ENCODE measurements at regions of chr1 and their contacts with region 1.

Region 1: DNA sequence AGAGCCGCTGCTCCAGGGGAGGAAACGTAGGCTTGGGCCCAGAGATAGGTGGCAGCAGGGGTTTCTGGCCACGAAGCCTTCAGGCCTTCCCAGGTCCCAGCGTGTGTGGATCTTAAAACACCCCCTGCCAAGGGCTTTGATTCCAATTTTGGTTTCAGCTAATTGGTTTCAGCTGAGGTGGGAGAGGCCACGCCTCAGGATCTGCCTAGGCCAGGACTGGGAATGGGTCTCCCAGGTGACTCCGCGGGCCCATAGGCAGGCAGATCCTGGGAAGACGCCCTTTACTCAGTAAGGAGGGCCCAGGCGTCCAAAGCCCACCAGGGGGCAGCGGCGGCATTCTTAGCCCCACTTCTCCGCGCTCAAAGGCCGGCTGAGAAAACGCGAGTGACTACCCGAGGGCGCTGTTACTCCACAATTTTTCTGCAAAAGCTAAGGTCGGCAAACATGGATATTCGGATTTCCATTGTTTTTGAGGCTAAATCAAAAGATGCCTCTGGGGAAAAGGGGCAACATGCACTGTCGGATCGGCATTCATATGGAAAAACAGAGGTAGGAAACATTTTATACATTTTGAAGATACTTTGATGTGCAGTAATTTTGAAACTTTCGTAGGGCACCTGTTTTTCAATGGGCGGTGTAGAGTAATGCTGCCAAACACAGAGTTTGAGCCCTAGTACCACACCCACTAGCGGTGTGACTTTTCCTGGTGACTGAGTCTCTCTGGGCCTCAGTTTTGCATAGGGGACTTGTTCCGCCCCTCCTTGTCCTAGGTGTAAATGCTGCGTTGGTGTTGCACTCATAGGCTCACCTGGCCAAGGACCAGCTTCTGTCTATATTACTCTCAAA is 31.8 kb upstream of the BCL10 start:
- DNase-seq: peak; percentile 22
- H3K4me3 Mint-ChIP-seq: no peak overlapping the region
- H3K27ac Mint-ChIP-seq: no peak overlapping the region
- H3K4me1 Mint-ChIP-seq: peaks cover 5% of the 10 kb centered on the region
- H3K27me3 Mint-ChIP-seq: peaks cover 62% of the 10 kb centered on the region

Region 2: DNA sequence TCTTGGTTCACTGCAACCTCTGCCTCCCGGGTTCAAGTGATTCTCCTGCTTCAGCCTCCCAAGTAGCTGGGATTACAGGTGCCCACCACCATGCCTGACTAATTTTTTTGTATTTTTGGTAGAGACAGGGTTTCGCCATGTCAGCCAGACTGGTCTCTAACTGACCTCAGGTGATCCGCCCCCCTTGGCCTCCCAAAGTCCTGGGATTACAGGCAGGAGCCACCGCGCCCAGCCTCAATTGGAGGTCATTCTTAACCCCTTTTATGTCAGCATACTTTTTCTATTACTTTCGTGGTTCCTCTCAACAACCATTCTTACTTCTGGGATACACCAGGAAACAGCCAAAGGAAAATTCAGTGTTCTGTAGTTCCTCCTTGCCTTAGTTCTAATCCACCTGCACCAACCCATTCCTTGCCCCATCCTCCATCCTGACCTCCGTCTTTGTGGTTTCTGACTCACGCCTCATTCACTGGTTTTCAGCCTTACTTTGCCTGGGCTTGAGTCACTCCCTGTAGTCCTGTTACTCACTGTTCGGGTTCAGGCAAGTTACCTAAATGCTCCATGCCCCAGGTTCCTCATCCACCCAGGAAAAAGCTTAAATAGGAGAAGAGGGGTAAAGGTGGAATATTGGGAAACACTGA is 18.9 kb before region 1 on chr1:
- intact Hi-C with region 1: no loop called
- DNase-seq: no peak
- H3K4me3 Mint-ChIP-seq: no peak overlapping the region
- H3K27ac Mint-ChIP-seq: no peak overlapping the region
- H3K4me1 Mint-ChIP-seq: peaks cover 6% of the 10 kb centered on the region
- H3K27me3 Mint-ChIP-seq: peaks cover 46% of the 10 kb centered on the region

Region 3: DNA sequence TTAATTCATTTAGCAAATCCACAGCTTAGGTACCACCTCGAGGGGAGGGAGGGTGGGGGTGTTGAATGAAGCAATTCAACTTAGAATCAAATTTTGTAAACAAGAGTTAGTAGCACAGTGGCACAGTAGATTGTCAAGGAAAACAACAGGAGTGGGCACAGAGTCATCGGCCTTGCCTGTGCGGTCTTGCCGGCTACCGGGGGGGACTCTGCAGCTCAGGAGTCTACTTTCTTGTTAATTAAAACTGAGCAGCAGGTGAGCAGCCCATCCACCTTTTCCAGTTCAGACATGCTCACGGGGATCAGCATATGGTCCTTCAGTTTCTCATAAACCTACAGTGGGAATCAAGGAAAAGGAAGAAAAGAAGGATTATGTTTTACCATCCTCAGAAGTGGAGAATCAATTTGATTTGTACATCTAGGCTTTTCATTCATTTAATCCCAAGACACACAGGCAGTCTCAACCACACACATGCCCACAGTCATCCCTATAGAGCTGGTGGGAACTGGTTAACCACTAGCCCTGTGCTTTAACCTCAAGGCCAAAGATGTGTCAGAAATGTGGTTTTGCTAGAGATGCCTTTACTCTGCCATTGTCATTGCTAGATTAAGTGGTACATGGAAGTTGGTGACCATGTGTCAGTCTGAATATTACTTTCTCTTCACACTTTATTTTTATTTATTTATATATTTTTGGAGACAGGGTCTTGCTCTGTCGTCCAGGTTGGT is 13.2 kb after region 1 on chr1:
- intact Hi-C with region 1: loop called (anchors 1 kb)
- DNase-seq: no peak
- H3K4me3 Mint-ChIP-seq: no peak overlapping the region
- H3K27ac Mint-ChIP-seq: no peak overlapping the region
- H3K4me1 Mint-ChIP-seq: peaks cover 10% of the 10 kb centered on the region
- H3K27me3 Mint-ChIP-seq: peaks cover 51% of the 10 kb centered on the region

Region 4: DNA sequence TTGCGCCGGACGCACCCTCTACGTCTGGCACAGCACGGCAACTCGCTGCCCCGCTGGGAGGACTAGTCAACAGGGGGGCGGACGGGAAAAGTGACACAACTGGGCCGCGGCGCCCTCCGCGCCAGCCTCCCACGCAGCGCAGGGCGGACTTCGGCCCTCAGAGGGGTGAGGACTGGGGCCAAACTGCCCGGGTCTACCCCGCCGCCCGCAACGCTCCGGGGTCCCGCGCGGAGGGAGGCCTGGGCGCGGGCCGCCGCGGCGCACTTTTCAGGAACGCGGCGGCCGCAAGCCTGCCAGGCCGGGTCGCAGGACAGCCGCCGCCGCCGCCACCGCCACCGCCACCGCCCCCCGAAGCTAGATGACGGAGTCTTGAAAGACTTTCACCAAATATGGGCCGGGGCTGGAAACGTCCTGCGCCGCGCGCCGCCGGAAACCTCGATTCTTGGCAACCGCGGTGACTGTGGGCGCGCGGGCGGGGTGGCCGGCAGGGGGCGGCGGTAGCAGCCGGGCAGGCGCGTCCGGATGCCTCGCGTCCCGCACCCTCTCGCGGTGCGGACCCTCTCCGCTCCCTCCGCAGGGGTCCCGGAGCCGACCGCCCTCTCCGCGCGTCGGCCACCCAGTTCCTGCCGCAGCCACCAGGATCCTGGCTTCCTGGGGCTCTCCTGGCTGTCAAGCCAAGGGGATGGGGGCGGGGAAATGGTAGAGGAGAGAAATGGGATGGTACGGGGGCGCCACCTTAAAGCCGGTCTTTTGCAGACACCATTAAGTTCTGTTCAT is 268.6 kb after region 1 on chr1:
- intact Hi-C with region 1: loop called (anchors 2 kb)
- DNase-seq: peak; percentile 47
- H3K4me3 Mint-ChIP-seq: peak overlapping the region; percentile 71
- H3K27ac Mint-ChIP-seq: no peak overlapping the region
- H3K4me1 Mint-ChIP-seq: peaks cover 19% of the 10 kb centered on the region
- H3K27me3 Mint-ChIP-seq: peaks cover 73% of the 10 kb centered on the region

Region 5: DNA sequence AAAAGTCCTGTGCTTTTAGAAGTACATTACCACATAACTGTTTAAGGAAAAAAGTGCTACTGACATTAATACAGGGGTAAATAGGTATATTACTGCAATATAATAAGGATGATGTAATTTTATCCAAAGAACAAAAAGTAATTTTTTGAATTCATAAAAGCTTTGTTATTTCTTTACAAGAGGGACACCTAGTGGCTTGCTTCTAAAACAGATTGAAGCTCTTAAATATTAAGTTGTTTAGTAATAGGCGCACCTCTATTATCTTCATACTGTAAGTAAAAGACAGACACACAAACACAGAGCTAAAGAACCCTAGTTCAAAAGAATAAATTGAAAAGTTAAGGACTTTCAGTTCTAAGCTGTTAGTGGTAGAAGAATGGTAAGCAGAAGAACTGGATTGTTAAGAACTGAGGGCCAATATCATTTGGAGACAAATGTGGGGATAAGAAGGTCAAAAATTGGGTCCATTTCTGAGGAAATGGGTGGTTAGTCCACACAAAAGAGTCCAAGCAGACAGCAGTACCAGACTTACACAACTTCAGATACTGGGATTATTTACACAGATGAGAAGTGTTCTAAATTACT is 384.6 kb after region 1 on chr1:
- intact Hi-C with region 1: loop called (anchors 1 kb)
- DNase-seq: no peak
- H3K4me3 Mint-ChIP-seq: no peak overlapping the region
- H3K27ac Mint-ChIP-seq: no peak overlapping the region
- H3K4me1 Mint-ChIP-seq: no peaks in the 10 kb centered on the region
- H3K27me3 Mint-ChIP-seq: no peaks in the 10 kb centered on the region

Region 6: DNA sequence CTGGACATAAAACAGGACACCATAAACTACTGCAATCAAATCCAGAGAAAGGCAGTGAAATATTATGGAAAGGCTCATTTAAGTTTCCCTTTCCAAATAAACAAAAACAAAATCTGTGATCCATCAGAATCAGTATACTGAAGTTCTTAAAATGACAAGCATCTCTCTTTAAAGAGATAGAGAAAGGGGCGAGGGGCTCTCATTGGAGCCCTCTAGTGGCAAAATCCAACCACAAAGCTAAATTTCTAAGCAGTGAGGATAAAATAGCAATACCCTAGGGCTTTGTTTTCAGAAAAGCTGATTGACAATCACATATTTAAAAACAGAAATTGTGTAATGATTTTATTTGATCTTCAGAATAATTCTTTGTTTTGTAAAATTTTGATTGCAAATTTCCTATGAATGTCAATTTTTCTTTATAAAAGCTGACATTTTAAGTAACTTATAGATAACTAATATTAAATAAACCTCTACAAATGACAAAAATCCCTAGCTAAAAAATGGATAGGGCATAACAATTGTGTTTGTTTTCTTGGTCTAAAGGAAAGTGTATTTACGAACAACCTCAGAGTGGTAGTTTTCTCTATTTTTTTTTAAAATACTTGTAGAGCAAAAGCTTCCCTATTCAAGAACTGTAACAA is 710.2 kb after region 1 on chr1:
- intact Hi-C with region 1: loop called (anchors 2 kb)
- DNase-seq: no peak
- H3K4me3 Mint-ChIP-seq: no peak overlapping the region
- H3K27ac Mint-ChIP-seq: no peak overlapping the region
- H3K4me1 Mint-ChIP-seq: no peaks in the 10 kb centered on the region
- H3K27me3 Mint-ChIP-seq: no peaks in the 10 kb centered on the region

Measured in activated T-helper 1 cell treated with anti-CD3 and anti-CD28 coated beads, Interleukin-12 subunit alpha, Interleukin-12 subunit beta, Interleukin-2, Interleukin-4 antibody, amounts not matched to agents 30 ng/mL and 10 ng/mL and 1 ng/mL, durations not matched to agents 14 hours and 24 hours and 36 hours (primary cell).